A673 (cell line): ENCODE measurements at regions of chr1 and their contacts with region 1.

Region 1: DNA sequence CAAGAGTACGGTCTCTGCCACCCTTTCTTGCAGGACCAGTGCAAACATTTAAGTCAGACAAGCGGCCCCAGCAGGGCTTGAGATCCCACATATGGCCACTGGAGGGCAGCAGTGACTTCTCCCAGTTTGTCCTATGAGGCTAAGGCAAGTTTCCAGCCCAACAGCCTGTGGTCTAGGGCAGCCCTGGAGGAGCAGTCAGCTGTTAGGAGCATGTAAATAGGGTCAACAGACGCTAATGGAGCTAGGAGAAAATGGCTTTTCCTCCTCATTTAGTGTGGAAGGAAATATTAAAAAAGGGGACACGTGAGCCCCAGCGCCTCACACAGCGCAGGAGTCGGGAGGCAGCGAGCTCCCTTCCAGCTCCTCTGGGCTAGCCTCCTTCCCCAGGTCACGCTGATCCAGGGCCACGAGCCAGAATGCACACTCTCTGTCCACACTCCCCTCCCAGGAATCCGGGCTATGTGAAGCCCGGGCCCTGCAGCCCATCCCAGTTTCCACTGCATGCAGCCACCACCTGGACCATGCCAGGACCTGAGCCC is 95.6 kb downstream of the LAMC2 start:
- DNase-seq: peak; percentile 91
- H3K4me3 ChIP-seq: no peak overlapping the region
- H3K27ac ChIP-seq: no peak overlapping the region
- H3K4me1 ChIP-seq: peaks cover 22% of the 10 kb centered on the region
- H3K27me3 ChIP-seq: no peaks in the 10 kb centered on the region
- CTCF ChIP-seq: peak; percentile 92

Region 2: DNA sequence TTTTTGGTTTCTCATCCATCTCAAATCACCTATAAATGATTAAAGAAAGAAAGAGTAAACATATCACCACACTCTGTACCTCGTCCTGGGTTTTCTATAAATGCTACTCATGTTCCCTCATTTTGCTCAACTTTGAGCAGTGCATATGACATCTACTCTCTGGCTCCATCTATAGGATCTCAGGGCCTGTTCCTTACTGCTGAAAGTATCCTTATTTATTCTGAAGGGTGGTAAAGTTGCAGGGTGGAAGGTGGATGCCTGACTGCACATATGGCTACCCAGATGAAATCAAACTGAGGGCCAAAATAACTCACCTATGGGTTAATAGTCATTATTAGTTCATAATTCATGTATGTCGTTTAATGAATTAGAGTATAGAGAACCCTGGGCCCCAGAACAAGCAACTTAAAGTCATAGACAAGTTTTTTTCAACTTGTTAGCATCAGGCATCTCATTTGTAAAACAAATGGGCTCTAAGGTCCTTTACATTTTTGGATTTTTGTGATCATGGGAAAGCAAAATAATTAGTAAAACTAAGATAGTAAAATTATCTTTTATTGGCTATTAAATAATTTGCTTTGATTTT is 262.1 kb after region 1 on chr1:
- CTCF ChIA-PET with region 1: no interaction called
- POLR2A ChIA-PET with region 1: no interaction called
- intact Hi-C with region 1: loop called (anchors 5 kb)
- DNase-seq: peak; percentile 75
- H3K4me3 ChIP-seq: no peak overlapping the region
- H3K27ac ChIP-seq: no peak overlapping the region
- H3K4me1 ChIP-seq: peaks cover 7% of the 10 kb centered on the region
- H3K27me3 ChIP-seq: no peaks in the 10 kb centered on the region
- CTCF ChIP-seq: peak; percentile 79

Region 3: GRCh38 chr1:183622884-183623785 is 341.5 kb after region 1 on chr1:
- CTCF ChIA-PET with region 1: no interaction called
- POLR2A ChIA-PET with region 1: no interaction called
- intact Hi-C with region 1: loop called (anchors 10 kb)
- DNase-seq: peak; percentile 68
- H3K4me3 ChIP-seq: no peak overlapping the region
- H3K27ac ChIP-seq: no peak overlapping the region
- H3K4me1 ChIP-seq: peaks cover 5% of the 10 kb centered on the region
- H3K27me3 ChIP-seq: no peaks in the 10 kb centered on the region
- CTCF ChIP-seq: peak; percentile 82

Region 4: GRCh38 chr1:183744132-183744913 is 462.7 kb after region 1 on chr1:
- CTCF ChIA-PET with region 1: no interaction called
- POLR2A ChIA-PET with region 1: no interaction called
- intact Hi-C with region 1: no loop called
- DNase-seq: no peak
- H3K4me3 ChIP-seq: no peak overlapping the region
- H3K27ac ChIP-seq: no peak overlapping the region
- H3K4me1 ChIP-seq: no peaks in the 10 kb centered on the region
- H3K27me3 ChIP-seq: no peaks in the 10 kb centered on the region
- CTCF ChIP-seq: no peak